K562 (cell line): ENCODE measurements at regions of chr18 and their contacts with region 1.

Region 1: DNA sequence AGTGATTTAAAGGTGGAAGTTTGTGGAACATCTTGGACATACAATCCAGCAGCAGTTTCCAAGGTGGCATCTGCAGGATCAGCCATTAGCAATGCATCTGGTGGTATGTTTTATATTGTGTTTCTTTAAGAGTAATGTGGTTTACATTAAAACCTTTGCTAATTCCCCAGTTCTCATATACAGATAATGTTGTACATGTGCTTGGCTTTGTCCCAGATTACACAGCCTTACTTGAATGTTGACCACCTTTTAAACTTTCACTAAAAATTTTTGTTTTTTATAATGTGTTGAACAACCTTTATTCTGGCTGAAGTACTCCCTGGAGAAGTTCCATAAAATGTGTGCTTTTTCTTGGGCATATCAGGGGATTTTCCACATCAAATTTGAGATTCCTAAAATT is 57.5 kb downstream of the MIB1 start:
- DNase-seq: no peak
- ATAC-seq: no peak
- H3K4me3 ChIP-seq: no peak overlapping the region
- H3K27ac ChIP-seq: no peak overlapping the region
- H3K4me1 ChIP-seq: no peaks in the 10 kb centered on the region
- H3K27me3 ChIP-seq: no peaks in the 10 kb centered on the region
- CTCF ChIP-seq: no peak
- EP300 ChIP-seq: no peak
- POLR2A ChIP-seq: no peak
- RAD21 ChIP-seq: no peak

Region 2: GRCh38 chr18:21786526-21786925 is 11.6 kb before region 1 on chr18:
- CTCF ChIA-PET with region 1: no interaction called
- POLR2A ChIA-PET with region 1: no interaction called
- in situ Hi-C with region 1: no loop called
- intact Hi-C with region 1: no loop called
- DNase-seq: no peak
- ATAC-seq: no peak
- H3K4me3 ChIP-seq: no peak overlapping the region
- H3K27ac ChIP-seq: no peak overlapping the region
- H3K4me1 ChIP-seq: no peaks in the 10 kb centered on the region
- H3K27me3 ChIP-seq: no peaks in the 10 kb centered on the region
- CTCF ChIP-seq: no peak
- EP300 ChIP-seq: no peak
- POLR2A ChIP-seq: no peak
- RAD21 ChIP-seq: no peak

Region 3: GRCh38 chr18:21851327-21851972 is 53.3 kb after region 1 on chr18:
- CTCF ChIA-PET with region 1: no interaction called
- POLR2A ChIA-PET with region 1: no interaction called
- in situ Hi-C with region 1: no loop called
- intact Hi-C with region 1: loop called (anchors 10 kb)
- DNase-seq: peak in 1 of 4 experiments; percentile 19
- ATAC-seq: peak; percentile 69; the same call in 1 of the 3 replicates
- H3K4me3 ChIP-seq: no peak overlapping the region
- H3K27ac ChIP-seq: no peak overlapping the region
- H3K4me1 ChIP-seq: no peaks in the 10 kb centered on the region
- H3K27me3 ChIP-seq: no peaks in the 10 kb centered on the region
- CTCF ChIP-seq: peak; percentile 14 to 50 (median 17); a peak in 3 of 6 replicates
- EP300 ChIP-seq: no peak
- POLR2A ChIP-seq: no peak
- RAD21 ChIP-seq: peak; percentile 15 to 56; a peak in 3 of 4 replicates